Psoas muscle (tissue), 8 donors: ENCODE measurements at regions of chr20 and their contacts with region 1.

Region 1: GRCh38 chr20:62900052-62900691 is 26.1 kb downstream of the DIDO1 start:
- DNase-seq: peak; percentile 74 to 87
- ATAC-seq: peak; percentile 88 to 93 (median 90)
- H3K4me3 ChIP-seq: no peak overlapping the region
- H3K27ac ChIP-seq: no peak overlapping the region
- H3K4me1 ChIP-seq: peaks cover 10% of the 10 kb centered on the region
- H3K27me3 ChIP-seq: no peaks in the 10 kb centered on the region
- CTCF ChIP-seq: peak; percentile 80

Region 2: GRCh38 chr20:62837800-62838454 is 62.2 kb before region 1 on chr20:
- intact Hi-C with region 1: no loop called
- DNase-seq: peak in 1 of 2 donors; percentile 50
- ATAC-seq: no peak
- H3K4me3 ChIP-seq: no peak overlapping the region
- H3K27ac ChIP-seq: no peak overlapping the region
- H3K4me1 ChIP-seq: no peaks in the 10 kb centered on the region
- H3K27me3 ChIP-seq: peaks cover 0 to 32% (median 6%) of the 10 kb centered on the region in 3 donors
- CTCF ChIP-seq: no peak

Region 3: GRCh38 chr20:62925716-62926238 is 25.6 kb after region 1 on chr20:
- intact Hi-C with region 1: loop called in 1 of 2 experiments (anchors 2 kb)
- DNase-seq: peak; percentile 41 to 69
- ATAC-seq: peak in 2 of 4 donors; percentile 11 to 30
- H3K4me3 ChIP-seq: peak overlapping the region; percentile 99
- H3K27ac ChIP-seq: peak overlapping the region; percentile 97
- H3K4me1 ChIP-seq: peaks cover 70% of the 10 kb centered on the region
- H3K27me3 ChIP-seq: no peaks in the 10 kb centered on the region
- CTCF ChIP-seq: no peak

Region 4: GRCh38 chr20:62937366-62938104 is 37.4 kb after region 1 on chr20:
- intact Hi-C with region 1: loop called in 1 of 2 experiments (anchors 5 kb)
- DNase-seq: peak; percentile 97 to 99
- ATAC-seq: peak; percentile 97 to 99 (median 98)
- H3K4me3 ChIP-seq: peak overlapping the region; percentile 93
- H3K27ac ChIP-seq: peak overlapping the region; percentile 93
- H3K4me1 ChIP-seq: peaks cover 38% of the 10 kb centered on the region
- H3K27me3 ChIP-seq: no peaks in the 10 kb centered on the region
- CTCF ChIP-seq: no peak